Mammary epithelial cell (primary cell): ENCODE measurements at regions of chr20 and their contacts with region 1.

Region 1: GRCh38 chr20:5001174-5002076 is at the start of gene SLC23A2:
- DNase-seq: no peak
- H3K4me3 ChIP-seq: peak within 1 kb of the TSS; percentile 76 to 85 (median 83)
- H3K27ac ChIP-seq: peak within 1 kb of the TSS; percentile 36
- H3K4me1 ChIP-seq: peaks cover 24% of the 10 kb centered on the region
- H3K27me3 ChIP-seq: no peaks in the 10 kb centered on the region
- CTCF ChIP-seq: no peak
- total RNA-seq, gene SLC23A2: 23.8 to 26.1 TPM

Region 2: GRCh38 chr20:5065879-5066383 is 64.5 kb after region 1 on chr20:
- CTCF ChIA-PET with region 1: no interaction called
- dilution Hi-C with region 1: no loop called
- in situ Hi-C with region 1: no loop called
- intact Hi-C with region 1: loop called (anchors 5 kb)
- DNase-seq: peak; percentile 99
- H3K4me3 ChIP-seq: no peak overlapping the region
- H3K27ac ChIP-seq: peak overlapping the region; percentile 97
- H3K4me1 ChIP-seq: peaks cover 19% of the 10 kb centered on the region
- H3K27me3 ChIP-seq: no peaks in the 10 kb centered on the region
- CTCF ChIP-seq: no peak

Region 3: GRCh38 chr20:5072756-5073659 is 71.6 kb after region 1 on chr20:
- CTCF ChIA-PET with region 1: interaction called, 31 read pairs
- dilution Hi-C with region 1: no loop called
- in situ Hi-C with region 1: no loop called
- intact Hi-C with region 1: loop called (anchors 5 kb)
- DNase-seq: peak; percentile 91
- H3K4me3 ChIP-seq: no peak overlapping the region
- H3K27ac ChIP-seq: peak overlapping the region; percentile 89
- H3K4me1 ChIP-seq: peaks cover 18% of the 10 kb centered on the region
- H3K27me3 ChIP-seq: no peaks in the 10 kb centered on the region
- CTCF ChIP-seq: no peak